ENCODE measurements at regions of chr10 and their contacts with region 1.

Region 1: DNA sequence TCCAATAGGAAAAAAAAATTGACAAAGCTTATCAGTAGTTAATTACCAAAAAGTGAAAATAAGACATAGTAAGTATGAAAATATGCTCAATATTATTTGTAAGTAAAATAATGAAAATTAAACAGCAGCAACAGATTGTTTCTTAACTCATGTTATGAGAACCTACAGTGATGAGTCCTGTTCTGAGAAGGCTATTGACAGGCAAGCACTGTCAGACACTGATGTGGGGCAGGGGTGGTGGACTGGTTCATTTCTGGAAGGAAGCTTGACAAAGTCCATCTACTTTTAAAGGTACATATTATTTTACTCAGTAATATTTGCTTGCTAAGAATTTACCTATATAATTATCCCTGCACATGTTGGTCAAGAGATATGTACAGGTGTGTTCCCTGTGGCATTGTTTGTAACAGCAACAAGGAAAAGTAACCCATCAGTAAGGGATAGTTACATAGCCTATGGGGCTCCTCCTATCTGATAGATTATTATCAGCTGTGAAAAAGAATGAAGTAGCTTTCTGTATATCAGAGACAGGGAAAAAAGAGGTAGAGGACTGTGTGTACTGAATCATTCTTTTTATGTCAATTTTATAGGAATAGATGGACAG is 161.6 kb downstream of the RTKN2 start:
- DNase-seq: no peak
- ATAC-seq: peak; percentile 62
- H3K4me3 ChIP-seq: no peak overlapping the region
- H3K27ac ChIP-seq: no peak overlapping the region
- H3K4me1 ChIP-seq: peaks cover 41% of the 10 kb centered on the region
- H3K27me3 ChIP-seq: no peaks in the 10 kb centered on the region
- CTCF ChIP-seq: no peak

Region 2: DNA sequence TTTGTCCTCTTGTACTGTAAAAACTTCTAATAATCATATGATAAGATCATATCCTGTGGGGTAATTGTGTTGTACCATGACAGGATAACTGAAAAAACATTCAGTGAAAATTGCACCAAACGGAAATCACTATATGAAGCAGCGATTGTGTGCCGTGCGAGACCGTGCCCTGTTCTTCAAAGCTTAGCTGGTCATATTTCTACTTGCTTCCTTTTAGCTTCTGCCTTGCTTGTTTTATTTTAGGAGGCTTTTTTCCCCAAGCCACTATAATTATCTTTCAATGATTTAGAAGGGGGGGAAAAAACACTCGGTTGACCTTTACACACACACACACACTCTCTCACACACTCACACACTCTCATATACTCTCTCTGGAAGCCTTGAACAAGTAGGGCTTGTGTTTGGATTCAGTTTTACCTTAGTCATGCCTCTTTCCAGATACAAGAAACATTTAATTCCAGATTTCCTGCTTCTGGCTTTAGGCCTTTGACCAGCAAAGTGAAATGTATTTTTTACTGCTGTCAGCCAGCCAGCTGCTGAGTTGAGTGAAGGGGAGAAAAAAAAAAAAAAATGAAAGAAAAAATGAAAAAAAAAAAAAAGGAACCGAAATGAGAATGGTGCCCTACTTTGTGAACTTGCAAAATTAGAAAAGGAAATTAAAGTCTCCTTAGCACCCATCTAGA is 24.2 kb before region 1 on chr10:
- CTCF ChIA-PET with region 1: no interaction called
- POLR2A ChIA-PET with region 1: interaction called, 15 read pairs
- intact Hi-C with region 1: loop called (anchors 1 kb)
- DNase-seq: peak; percentile 69
- ATAC-seq: peak; percentile 58
- H3K4me3 ChIP-seq: peak overlapping the region; percentile 24
- H3K27ac ChIP-seq: peak overlapping the region; percentile 54
- H3K4me1 ChIP-seq: peaks cover 53% of the 10 kb centered on the region
- H3K27me3 ChIP-seq: no peaks in the 10 kb centered on the region
- CTCF ChIP-seq: no peak

Region 3: GRCh38 chr10:62095181-62096071 is 11.6 kb before region 1 on chr10:
- CTCF ChIA-PET with region 1: no interaction called
- POLR2A ChIA-PET with region 1: interaction called, 7 read pairs
- intact Hi-C with region 1: loop called (anchors 1 kb)
- DNase-seq: peak; percentile 97
- ATAC-seq: peak; percentile 50
- H3K4me3 ChIP-seq: peak overlapping the region; percentile 43
- H3K27ac ChIP-seq: peak overlapping the region; percentile 57
- H3K4me1 ChIP-seq: peaks cover 43% of the 10 kb centered on the region
- H3K27me3 ChIP-seq: no peaks in the 10 kb centered on the region
- CTCF ChIP-seq: no peak